ENCODE measurements at regions of chr15 and their contacts with region 1.

Region 1: GRCh38 chr15:58182460-58183163 is 44.4 kb downstream of the AQP9 start:
- DNase-seq: peak; percentile 40
- ATAC-seq: peak; percentile 73
- H3K4me3 Mint-ChIP-seq: no peak overlapping the region
- H3K27ac Mint-ChIP-seq: no peak overlapping the region
- H3K4me1 Mint-ChIP-seq: peaks cover 6% of the 10 kb centered on the region
- H3K27me3 Mint-ChIP-seq: peaks cover 24% of the 10 kb centered on the region

Region 2: GRCh38 chr15:58043192-58043903 is 139.3 kb before region 1 on chr15:
- CTCF ChIA-PET with region 1: interaction called, 11 read pairs
- POLR2A ChIA-PET with region 1: no interaction called
- DNase-seq: peak; percentile 56
- ATAC-seq: no peak
- H3K4me3 Mint-ChIP-seq: no peak overlapping the region
- H3K27ac Mint-ChIP-seq: no peak overlapping the region
- H3K4me1 Mint-ChIP-seq: no peaks in the 10 kb centered on the region
- H3K27me3 Mint-ChIP-seq: peaks cover 28% of the 10 kb centered on the region

Region 3: DNA sequence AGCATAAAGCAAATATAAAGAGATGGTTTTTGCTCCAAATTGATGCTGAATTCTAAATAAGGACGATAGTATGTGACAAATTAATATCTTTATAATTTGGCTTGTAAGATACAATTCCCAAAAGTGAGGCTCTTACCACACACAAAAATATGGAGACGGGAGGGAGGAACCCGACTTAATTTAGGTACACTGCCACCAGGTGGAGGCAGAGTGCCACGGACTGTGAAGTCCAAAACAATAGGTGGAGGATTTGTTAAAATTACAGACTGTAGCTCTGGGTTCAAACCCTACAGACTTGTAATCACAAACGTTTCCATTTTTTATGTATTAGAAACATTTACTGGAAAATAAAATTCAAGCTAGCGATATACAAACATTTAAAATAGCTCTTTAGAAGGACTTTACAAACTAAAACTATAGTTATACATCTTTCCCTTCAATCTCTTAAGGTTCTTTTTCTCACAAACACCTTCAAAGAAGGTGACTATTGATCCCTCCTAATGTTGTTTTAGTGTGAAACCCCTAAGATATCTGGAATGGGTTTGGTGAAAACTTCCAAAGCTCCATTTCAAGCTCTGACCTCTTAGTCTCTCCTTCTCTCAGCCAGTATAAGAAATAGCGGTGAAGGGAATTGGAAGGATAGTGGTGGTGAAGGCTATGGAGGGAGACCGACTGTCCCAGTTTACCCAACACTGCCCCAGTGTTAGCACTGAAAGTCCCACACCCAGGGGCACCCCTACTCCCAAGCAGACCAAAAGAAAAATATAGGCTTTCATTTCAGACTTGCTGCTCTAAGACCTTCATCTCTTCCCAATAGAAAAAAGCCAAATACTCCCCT is 45.3 kb after region 1 on chr15:
- CTCF ChIA-PET with region 1: no interaction called
- POLR2A ChIA-PET with region 1: no interaction called
- DNase-seq: peak; percentile 80
- ATAC-seq: peak; percentile 77
- H3K4me3 Mint-ChIP-seq: no peak overlapping the region
- H3K27ac Mint-ChIP-seq: no peak overlapping the region
- H3K4me1 Mint-ChIP-seq: peaks cover 15% of the 10 kb centered on the region
- H3K27me3 Mint-ChIP-seq: peaks cover 13% of the 10 kb centered on the region

Region 4: GRCh38 chr15:58241872-58242271 is 59.3 kb after region 1 on chr15:
- CTCF ChIA-PET with region 1: no interaction called
- POLR2A ChIA-PET with region 1: no interaction called
- DNase-seq: no peak
- ATAC-seq: no peak
- H3K4me3 Mint-ChIP-seq: no peak overlapping the region
- H3K27ac Mint-ChIP-seq: no peak overlapping the region
- H3K4me1 Mint-ChIP-seq: peaks cover 4% of the 10 kb centered on the region
- H3K27me3 Mint-ChIP-seq: peaks cover 3% of the 10 kb centered on the region

Measured in activated CD8-positive, alpha-beta T cell treated with anti-CD3 and anti-CD28 coated beads, Interleukin-2, amount 10 ng/mL, durations not matched to agents 7 days and 5 days (primary cell).